Natural killer cell (primary cell): ENCODE measurements at regions of chr16 and their contacts with region 1.

Region 1: GRCh38 chr16:56600398-56600999 is 7.9 kb upstream of the MT2A start:
- DNase-seq: peak in 1 of 2 donors; percentile 71
- ATAC-seq: peak; percentile 57 to 86 (median 79)
- H3K4me3 ChIP-seq: no peak overlapping the region
- H3K4me3 Mint-ChIP-seq: no peak overlapping the region
- H3K27ac ChIP-seq: no peak overlapping the region
- H3K27ac Mint-ChIP-seq: no peak overlapping the region
- H3K4me1 ChIP-seq: no peaks in the 10 kb centered on the region
- H3K4me1 Mint-ChIP-seq: peaks cover 0 to 6% of the 10 kb centered on the region in 2 donors
- H3K27me3 ChIP-seq: no peaks in the 10 kb centered on the region
- H3K27me3 Mint-ChIP-seq: peaks cover 17 to 29% of the 10 kb centered on the region in 2 donors
- CTCF ChIP-seq: peak; percentile 61

Region 2: GRCh38 chr16:56513972-56514371 is 86.5 kb before region 1 on chr16:
- intact Hi-C with region 1: loop called (anchors 1 kb)
- DNase-seq: peak; percentile 18 to 74
- ATAC-seq: peak; percentile 64 to 85 (median 77)
- H3K4me3 ChIP-seq: no peak overlapping the region
- H3K4me3 Mint-ChIP-seq: no peak overlapping the region
- H3K27ac ChIP-seq: no peak overlapping the region
- H3K27ac Mint-ChIP-seq: peak overlapping the region; percentile 37 to 50
- H3K4me1 ChIP-seq: peaks cover 1% of the 10 kb centered on the region
- H3K4me1 Mint-ChIP-seq: peaks cover 14 to 17% of the 10 kb centered on the region in 2 donors
- H3K27me3 ChIP-seq: no peaks in the 10 kb centered on the region
- H3K27me3 Mint-ChIP-seq: no peaks in the 10 kb centered on the region
- CTCF ChIP-seq: peak; percentile 72

Region 3: DNA sequence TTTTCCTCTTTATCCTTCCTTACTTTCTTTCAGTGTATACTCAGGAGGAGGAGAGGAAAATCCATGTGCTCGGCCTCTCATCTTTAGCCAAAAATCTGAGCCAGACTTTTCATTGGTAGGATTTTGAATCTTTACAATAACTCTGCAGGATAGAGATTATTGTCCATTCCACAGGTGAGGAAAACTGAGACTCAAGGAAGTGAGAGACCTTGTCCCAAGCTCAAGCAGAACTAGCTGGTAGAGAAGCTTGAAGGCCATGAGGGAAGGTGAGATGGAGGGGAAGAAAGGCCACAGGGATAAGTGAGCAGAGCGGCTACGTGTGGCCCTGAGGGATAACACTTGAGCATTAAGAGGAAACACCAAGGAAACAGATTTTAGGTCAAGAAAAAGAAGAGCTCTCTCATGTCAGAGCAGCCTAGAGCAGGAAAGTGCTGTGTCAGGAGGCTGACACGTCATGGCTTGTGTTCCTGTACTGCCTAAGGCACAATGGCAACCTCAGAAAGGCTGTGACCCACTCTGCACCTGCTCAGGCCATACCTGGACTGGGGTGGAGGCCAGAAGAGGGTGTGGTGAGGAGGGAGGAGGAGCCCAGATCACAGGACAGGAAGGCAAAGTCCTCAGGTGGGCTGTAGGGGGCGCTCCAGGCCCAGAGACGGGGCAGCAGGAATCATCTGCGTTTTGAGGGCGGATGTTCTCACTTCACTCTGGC is 23.8 kb before region 1 on chr16:
- intact Hi-C with region 1: loop called (anchors 1 kb)
- DNase-seq: peak; percentile 79 to 92
- ATAC-seq: peak; percentile 98 to 100 (median 99)
- H3K4me3 ChIP-seq: no peak overlapping the region
- H3K4me3 Mint-ChIP-seq: no peak overlapping the region
- H3K27ac ChIP-seq: no peak overlapping the region
- H3K27ac Mint-ChIP-seq: no peak overlapping the region
- H3K4me1 ChIP-seq: peaks cover 7% of the 10 kb centered on the region
- H3K4me1 Mint-ChIP-seq: peaks cover 0 to 4% of the 10 kb centered on the region in 2 donors
- H3K27me3 ChIP-seq: no peaks in the 10 kb centered on the region
- H3K27me3 Mint-ChIP-seq: peaks cover 0 to 16% of the 10 kb centered on the region in 2 donors
- CTCF ChIP-seq: peak; percentile 76

Region 4: DNA sequence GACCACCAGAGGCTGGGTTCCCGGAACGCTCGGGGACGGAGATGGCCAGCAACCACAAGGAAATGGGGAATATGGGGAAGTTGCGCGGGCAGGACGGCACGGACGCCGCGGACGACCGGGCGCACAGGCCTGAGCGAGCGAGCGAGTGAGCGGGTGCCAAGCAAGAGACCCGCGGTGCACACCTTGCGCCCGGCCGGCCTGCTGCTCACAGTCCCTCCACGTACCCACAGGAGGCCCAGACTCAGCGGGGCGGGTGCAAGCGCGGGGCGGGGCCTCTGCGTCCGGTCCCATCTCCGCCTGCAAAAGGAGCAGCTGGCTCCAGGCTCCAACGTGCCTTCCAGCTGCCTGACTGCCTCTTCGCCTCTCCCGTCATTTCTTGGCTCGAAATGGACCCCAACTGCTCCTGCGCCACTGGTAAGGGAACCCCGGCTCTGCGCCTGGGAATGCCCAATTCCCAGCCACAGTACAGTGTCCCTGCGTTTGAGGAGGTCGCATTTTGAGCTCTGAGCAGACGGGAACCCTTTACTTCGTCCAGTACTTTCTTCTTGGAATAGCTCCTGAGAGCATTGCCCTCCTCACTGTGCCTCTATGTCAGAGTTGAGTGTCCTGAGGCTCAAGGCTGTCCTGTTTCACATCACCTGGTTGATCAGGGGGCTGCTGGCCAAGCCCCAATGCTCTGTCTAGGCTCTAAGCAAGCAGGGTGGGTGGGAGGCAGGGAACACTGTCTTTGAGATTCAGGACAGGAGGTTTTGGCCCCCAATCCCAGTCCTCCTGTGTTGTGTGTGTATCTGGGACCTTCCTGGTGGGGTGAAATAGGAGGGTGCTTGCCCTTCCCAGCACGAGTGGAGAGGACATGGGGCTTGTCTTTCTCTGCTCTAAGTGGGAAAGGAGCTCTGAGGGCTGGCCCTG is 16.9 kb after region 1 on chr16:
- intact Hi-C with region 1: no loop called
- DNase-seq: peak in 1 of 2 donors; percentile 70
- ATAC-seq: peak; percentile 53 to 90 (median 55)
- H3K4me3 ChIP-seq: no peak overlapping the region
- H3K4me3 Mint-ChIP-seq: peak overlapping the region; percentile 31
- H3K27ac ChIP-seq: no peak overlapping the region
- H3K27ac Mint-ChIP-seq: no peak overlapping the region
- H3K4me1 ChIP-seq: peaks cover 11% of the 10 kb centered on the region
- H3K4me1 Mint-ChIP-seq: peaks cover 0 to 10% of the 10 kb centered on the region in 2 donors
- H3K27me3 ChIP-seq: peaks cover 10% of the 10 kb centered on the region
- H3K27me3 Mint-ChIP-seq: peaks cover 19 to 37% of the 10 kb centered on the region in 2 donors
- CTCF ChIP-seq: no peak

Region 5: GRCh38 chr16:56673921-56674320 is 73.4 kb after region 1 on chr16:
- intact Hi-C with region 1: no loop called
- DNase-seq: peak in 1 of 2 donors; percentile 58
- ATAC-seq: peak in 2 of 3 donors; percentile 42 to 52
- H3K4me3 ChIP-seq: no peak overlapping the region
- H3K4me3 Mint-ChIP-seq: no peak overlapping the region
- H3K27ac ChIP-seq: no peak overlapping the region
- H3K27ac Mint-ChIP-seq: no peak overlapping the region
- H3K4me1 ChIP-seq: peaks cover 11% of the 10 kb centered on the region
- H3K4me1 Mint-ChIP-seq: peaks cover 4 to 22% of the 10 kb centered on the region in 2 donors
- H3K27me3 ChIP-seq: peaks cover 15% of the 10 kb centered on the region
- H3K27me3 Mint-ChIP-seq: peaks cover 54 to 57% of the 10 kb centered on the region in 2 donors
- CTCF ChIP-seq: no peak

Region 6: GRCh38 chr16:56911771-56912571 is 311.5 kb after region 1 on chr16:
- intact Hi-C with region 1: no loop called
- DNase-seq: no peak
- ATAC-seq: no peak
- H3K4me3 ChIP-seq: no peak overlapping the region
- H3K4me3 Mint-ChIP-seq: no peak overlapping the region
- H3K27ac ChIP-seq: peak overlapping the region; percentile 68
- H3K27ac Mint-ChIP-seq: no peak overlapping the region
- H3K4me1 ChIP-seq: peaks cover 47% of the 10 kb centered on the region
- H3K4me1 Mint-ChIP-seq: peaks cover 2 to 12% of the 10 kb centered on the region in 2 donors
- H3K27me3 ChIP-seq: no peaks in the 10 kb centered on the region
- H3K27me3 Mint-ChIP-seq: peaks cover 10 to 14% of the 10 kb centered on the region in 2 donors
- CTCF ChIP-seq: no peak

Region 7: DNA sequence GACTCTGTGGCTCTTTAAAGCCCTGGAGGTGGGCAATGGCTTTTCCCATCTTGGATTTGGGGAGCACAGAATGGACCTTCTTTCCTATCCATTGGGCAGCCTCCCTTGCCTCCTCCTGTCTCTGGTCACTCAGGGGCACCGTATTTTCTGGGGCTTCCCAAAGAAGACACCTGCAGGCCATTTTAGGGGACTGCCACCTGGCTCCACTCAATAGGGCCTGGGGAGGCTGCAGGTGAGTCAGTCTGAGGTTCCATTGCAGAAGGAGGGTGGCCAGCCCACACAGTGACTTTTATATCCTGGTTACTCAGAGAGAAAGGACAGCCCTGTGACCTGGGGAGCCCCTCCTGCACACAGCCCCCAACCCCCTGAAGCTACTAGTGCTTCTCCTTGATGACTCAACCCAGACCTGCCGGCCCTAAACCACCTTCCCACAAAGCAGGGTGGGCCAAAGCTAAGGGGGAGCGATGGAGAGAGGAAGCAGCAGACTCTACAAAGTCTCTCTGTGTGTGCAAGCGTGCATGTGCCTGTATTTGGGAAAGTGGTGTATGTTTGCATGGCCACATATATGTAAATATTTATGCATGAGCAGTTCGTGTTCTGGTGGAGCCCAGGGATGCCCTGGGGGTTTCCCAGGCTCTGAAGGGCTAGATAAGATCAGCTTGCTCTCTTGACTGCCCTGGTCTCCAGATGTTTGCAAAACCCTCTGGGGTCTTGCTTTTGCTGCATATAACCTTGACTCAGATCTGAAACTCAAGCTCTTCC is 776.8 kb after region 1 on chr16:
- intact Hi-C with region 1: no loop called
- DNase-seq: no peak
- ATAC-seq: peak in 2 of 3 donors; percentile 24 to 31
- H3K4me3 ChIP-seq: no peak overlapping the region
- H3K4me3 Mint-ChIP-seq: no peak overlapping the region
- H3K27ac ChIP-seq: no peak overlapping the region
- H3K27ac Mint-ChIP-seq: no peak overlapping the region
- H3K4me1 ChIP-seq: no peaks in the 10 kb centered on the region
- H3K4me1 Mint-ChIP-seq: no peaks in the 10 kb centered on the region
- H3K27me3 ChIP-seq: no peaks in the 10 kb centered on the region
- H3K27me3 Mint-ChIP-seq: peaks cover 0 to 6% of the 10 kb centered on the region in 2 donors
- CTCF ChIP-seq: no peak